ENCODE measurements at regions of chr13 and their contacts with region 1.

Region 1: GRCh38 chr13:28099396-28100149 is 803 bp downstream of the FLT3 start:
- DNase-seq: no peak
- H3K4me3 ChIP-seq: no peak overlapping the region
- H3K27ac ChIP-seq: no peak overlapping the region
- H3K4me1 ChIP-seq: peaks cover 11% of the 10 kb centered on the region
- H3K27me3 ChIP-seq: peaks cover 21% of the 10 kb centered on the region
- CTCF ChIP-seq: no peak

Region 2: DNA sequence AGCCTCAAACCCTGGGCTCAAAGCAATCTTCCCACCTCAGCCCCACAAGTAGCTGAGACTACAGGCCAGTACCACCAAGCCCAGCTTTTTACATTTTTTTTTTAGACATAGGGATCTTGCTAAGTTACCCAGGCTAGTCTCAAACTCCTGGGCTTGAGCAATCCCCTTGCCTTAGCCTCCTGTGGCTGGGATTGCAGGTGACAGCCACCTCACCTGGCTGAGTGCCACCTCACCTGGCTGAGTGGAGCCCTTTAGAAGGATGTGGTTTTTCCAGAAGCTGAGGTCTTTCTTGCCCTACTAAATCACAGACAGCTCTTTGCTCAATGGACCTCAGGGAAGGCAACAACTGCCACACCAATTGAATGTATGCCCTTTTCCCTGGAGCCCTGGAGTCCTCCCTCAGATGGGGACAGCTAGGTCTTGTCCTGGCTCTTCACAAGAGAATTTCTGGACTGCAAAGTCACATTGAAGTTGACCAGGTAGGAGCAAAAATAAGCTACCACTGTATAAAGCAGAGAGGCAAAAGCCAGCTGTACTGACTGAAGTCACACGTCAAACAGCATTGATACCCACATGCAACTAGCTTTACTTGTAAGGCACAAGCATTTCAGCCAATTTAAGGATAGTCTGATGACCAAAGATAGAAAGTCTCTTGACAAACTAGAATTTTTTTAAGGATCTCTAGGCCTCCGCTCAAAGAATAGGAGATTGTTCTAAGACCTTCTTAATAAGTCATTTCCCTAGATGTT is 165.8 kb before region 1 on chr13:
- CTCF ChIA-PET with region 1: no interaction called
- dilution Hi-C with region 1: no loop called
- in situ Hi-C with region 1: no loop called
- intact Hi-C with region 1: no loop called
- DNase-seq: no peak
- H3K4me3 ChIP-seq: no peak overlapping the region
- H3K27ac ChIP-seq: no peak overlapping the region
- H3K4me1 ChIP-seq: no peaks in the 10 kb centered on the region
- H3K27me3 ChIP-seq: peaks cover 21% of the 10 kb centered on the region
- CTCF ChIP-seq: no peak

Region 3: GRCh38 chr13:28031220-28031895 is 68.2 kb before region 1 on chr13:
- CTCF ChIA-PET with region 1: no interaction called
- dilution Hi-C with region 1: loop called (anchors 5 kb)
- in situ Hi-C with region 1: no loop called
- intact Hi-C with region 1: no loop called
- DNase-seq: no peak
- H3K4me3 ChIP-seq: no peak overlapping the region
- H3K27ac ChIP-seq: no peak overlapping the region
- H3K4me1 ChIP-seq: no peaks in the 10 kb centered on the region
- H3K27me3 ChIP-seq: no peaks in the 10 kb centered on the region
- CTCF ChIP-seq: no peak

Measured in mammary epithelial cell (primary cell).